ENCODE measurements at regions of chr3 and their contacts with region 1.

Region 1: GRCh38 chr3:123750659-123751420 is 133.3 kb downstream of the MYLK start:
- DNase-seq: peak; percentile 64
- H3K4me3 ChIP-seq: no peak overlapping the region
- H3K27ac ChIP-seq: peak overlapping the region; percentile 46
- H3K4me1 ChIP-seq: peaks cover 15% of the 10 kb centered on the region
- H3K27me3 ChIP-seq: no peaks in the 10 kb centered on the region
- CTCF ChIP-seq: no peak
- POLR2A ChIP-seq: no peak

Region 2: GRCh38 chr3:123595396-123596180 is 155.3 kb before region 1 on chr3:
- CTCF ChIA-PET with region 1: no interaction called
- POLR2A ChIA-PET with region 1: no interaction called
- dilution Hi-C with region 1: no loop called
- intact Hi-C with region 1: no loop called
- DNase-seq: peak; percentile 21
- H3K4me3 ChIP-seq: no peak overlapping the region
- H3K27ac ChIP-seq: no peak overlapping the region
- H3K4me1 ChIP-seq: peaks cover 16% of the 10 kb centered on the region
- H3K27me3 ChIP-seq: no peaks in the 10 kb centered on the region
- CTCF ChIP-seq: no peak
- POLR2A ChIP-seq: no peak

Region 3: DNA sequence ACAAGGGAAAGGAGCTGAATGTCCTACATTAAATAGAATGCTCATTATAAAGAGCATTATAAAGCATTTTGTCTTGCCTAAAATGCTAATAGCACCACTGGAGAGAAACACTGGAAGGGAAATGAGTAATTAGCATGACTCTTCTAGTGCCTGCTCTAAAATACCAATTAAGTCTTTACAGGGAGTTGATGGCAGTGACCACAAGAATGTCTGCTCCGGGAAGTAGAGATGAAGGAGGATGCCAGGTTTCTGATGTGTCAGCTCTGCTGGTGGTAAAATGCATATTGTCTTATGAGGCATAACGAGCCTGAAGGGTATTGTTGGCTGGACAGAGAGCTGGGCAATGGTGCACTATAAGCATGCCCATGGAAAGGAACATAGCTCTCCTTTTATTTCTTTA is 83.8 kb after region 1 on chr3:
- CTCF ChIA-PET with region 1: interaction called, 3 read pairs
- POLR2A ChIA-PET with region 1: no interaction called
- dilution Hi-C with region 1: no loop called
- intact Hi-C with region 1: loop called (anchors 1 kb)
- DNase-seq: peak; percentile 47
- H3K4me3 ChIP-seq: no peak overlapping the region
- H3K27ac ChIP-seq: no peak overlapping the region
- H3K4me1 ChIP-seq: peaks cover 9% of the 10 kb centered on the region
- H3K27me3 ChIP-seq: no peaks in the 10 kb centered on the region
- CTCF ChIP-seq: no peak
- POLR2A ChIP-seq: no peak

Region 4: GRCh38 chr3:123947482-123947881 is 196.6 kb after region 1 on chr3:
- CTCF ChIA-PET with region 1: no interaction called
- POLR2A ChIA-PET with region 1: no interaction called
- dilution Hi-C with region 1: no loop called
- intact Hi-C with region 1: no loop called
- DNase-seq: no peak
- H3K4me3 ChIP-seq: no peak overlapping the region
- H3K27ac ChIP-seq: no peak overlapping the region
- H3K4me1 ChIP-seq: no peaks in the 10 kb centered on the region
- H3K27me3 ChIP-seq: no peaks in the 10 kb centered on the region
- CTCF ChIP-seq: no peak
- POLR2A ChIP-seq: no peak

Region 5: DNA sequence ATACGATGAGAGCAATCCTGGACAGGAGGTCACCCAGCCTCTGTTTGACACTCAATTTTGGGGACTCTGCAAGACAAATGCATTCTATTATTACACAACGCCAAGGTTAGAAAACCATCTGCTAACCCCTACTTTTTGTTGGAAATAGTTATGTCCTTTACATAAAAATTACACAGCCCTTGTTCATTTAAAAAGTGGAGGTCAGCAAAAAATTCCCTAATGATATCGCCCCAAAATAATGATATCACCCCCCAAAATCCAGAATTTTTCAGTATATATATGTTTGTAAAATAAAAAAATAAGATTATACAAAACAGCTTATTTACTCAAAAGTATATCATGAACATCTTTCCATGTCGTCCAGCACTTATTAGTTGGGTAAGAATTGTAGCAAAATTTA is 229.7 kb after region 1 on chr3:
- CTCF ChIA-PET with region 1: interaction called, 4 read pairs
- POLR2A ChIA-PET with region 1: no interaction called
- dilution Hi-C with region 1: no loop called
- intact Hi-C with region 1: loop called (anchors 2 kb)
- DNase-seq: no peak
- H3K4me3 ChIP-seq: no peak overlapping the region
- H3K27ac ChIP-seq: no peak overlapping the region
- H3K4me1 ChIP-seq: no peaks in the 10 kb centered on the region
- H3K27me3 ChIP-seq: peaks cover 38 to 58% of the 10 kb centered on the region in 2 experiments
- CTCF ChIP-seq: no peak
- POLR2A ChIP-seq: no peak

Region 6: GRCh38 chr3:124277144-124277890 is 526.5 kb after region 1 on chr3:
- CTCF ChIA-PET with region 1: no interaction called
- POLR2A ChIA-PET with region 1: no interaction called
- dilution Hi-C with region 1: no loop called
- intact Hi-C with region 1: no loop called
- DNase-seq: peak; percentile 77
- H3K4me3 ChIP-seq: no peak overlapping the region
- H3K27ac ChIP-seq: no peak overlapping the region
- H3K4me1 ChIP-seq: peaks cover 31% of the 10 kb centered on the region
- H3K27me3 ChIP-seq: no peaks in the 10 kb centered on the region
- CTCF ChIP-seq: peak in 1 of 2 donors; percentile 15
- POLR2A ChIP-seq: no peak

Measured in endothelial cell of umbilical vein (primary cell).